H1 (cell line): ENCODE measurements at regions of chr1 and their contacts with region 1.

Region 1: DNA sequence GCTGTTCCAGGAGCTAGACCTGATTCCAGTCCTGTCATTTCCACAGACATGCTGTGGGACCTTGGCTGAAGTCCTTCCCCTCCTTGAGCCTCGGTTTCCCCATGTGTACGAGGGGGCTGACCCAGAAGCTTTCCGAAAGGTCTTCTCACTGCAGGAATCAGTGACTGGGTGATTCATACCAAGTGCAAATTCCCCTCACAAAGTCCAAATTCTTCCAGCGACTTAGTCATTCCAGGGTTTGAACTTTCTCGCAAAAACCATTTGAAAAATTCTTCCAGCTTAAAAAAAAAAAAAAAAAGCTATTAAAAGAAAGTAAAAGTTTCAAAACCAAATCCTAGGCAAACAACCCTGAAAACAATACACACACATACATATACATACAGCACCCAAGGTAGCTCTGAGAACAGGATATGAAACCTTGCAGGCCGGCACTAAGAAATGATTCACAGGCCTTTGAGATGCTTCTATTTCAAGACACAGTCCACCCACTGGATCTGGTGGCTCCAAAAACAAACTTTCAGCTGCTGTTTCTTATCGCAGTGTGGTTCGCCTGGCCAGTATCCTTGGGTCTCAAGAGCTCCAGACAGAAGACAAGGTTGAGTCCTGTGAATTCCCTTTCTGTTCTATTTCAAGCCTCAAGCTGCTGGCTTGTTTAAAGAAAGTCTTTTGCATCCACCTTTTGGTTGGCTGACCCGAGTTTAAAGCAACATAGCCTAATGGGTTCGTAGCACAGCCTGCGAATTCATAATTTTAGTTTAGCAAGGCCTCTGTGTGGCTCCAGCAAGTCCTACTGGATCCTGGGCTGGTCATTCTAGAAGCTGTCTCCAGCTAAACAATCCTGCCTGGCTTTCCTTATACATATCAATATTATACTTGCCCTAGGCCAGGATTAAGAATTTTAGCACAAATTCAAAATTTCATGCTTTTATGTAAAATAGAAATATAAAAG is 18.0 kb upstream of the ID3 start:
- DNase-seq: no peak
- H3K4me3 ChIP-seq: no peak overlapping the region
- H3K27ac ChIP-seq: no peak overlapping the region
- H3K4me1 ChIP-seq: peaks cover 2 to 6% (median 3%) of the 10 kb centered on the region in 4 experiments; a peak in 4 of 7 replicates
- H3K27me3 ChIP-seq: no peaks in the 10 kb centered on the region
- CTCF ChIP-seq: no peak
- EP300 ChIP-seq: no peak
- POLR2A ChIP-seq: no peak
- RAD21 ChIP-seq: no peak

Region 2: DNA sequence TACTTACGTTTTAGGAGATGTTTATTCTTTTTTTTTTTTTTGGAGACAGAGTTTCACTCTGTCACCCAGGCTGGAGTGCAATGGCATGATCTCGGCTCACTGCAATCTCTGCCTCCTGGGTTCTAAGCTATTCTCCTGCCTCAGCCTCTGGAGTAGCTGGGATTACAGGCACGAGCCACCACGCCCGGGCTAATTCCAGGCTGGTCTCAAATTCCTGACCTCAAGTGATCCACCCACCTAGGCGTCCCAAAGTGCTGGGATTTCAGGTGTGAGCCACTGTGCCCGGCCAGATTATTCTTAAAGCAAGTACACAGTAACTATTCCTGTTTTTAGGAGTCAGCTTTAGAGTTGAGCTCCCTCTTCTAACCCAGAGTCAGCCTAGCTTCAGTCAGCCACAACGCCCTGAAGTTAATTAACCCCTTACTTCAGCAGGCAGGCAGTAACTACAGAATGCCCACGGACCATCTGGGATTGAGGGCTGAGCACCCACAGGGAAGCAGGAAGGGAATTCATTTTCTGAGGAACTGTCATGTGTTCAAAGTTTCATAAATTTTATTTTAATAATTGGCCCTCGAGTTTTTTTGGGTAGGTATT is 12.7 kb before region 1 on chr1:
- CTCF ChIA-PET with region 1: interaction called, 18 read pairs
- POLR2A ChIA-PET with region 1: interaction called, 283 read pairs
- DNase-seq: no peak
- H3K4me3 ChIP-seq: no peak overlapping the region
- H3K27ac ChIP-seq: no peak overlapping the region
- H3K4me1 ChIP-seq: peaks cover 16 to 36% (median 20%) of the 10 kb centered on the region in 4 experiments
- H3K27me3 ChIP-seq: peaks cover 0 to 4% (median 0%) of the 10 kb centered on the region in 4 experiments; a peak in 4 of 7 replicates
- CTCF ChIP-seq: no peak
- EP300 ChIP-seq: no peak
- POLR2A ChIP-seq: no peak
- RAD21 ChIP-seq: no peak

Region 3: DNA sequence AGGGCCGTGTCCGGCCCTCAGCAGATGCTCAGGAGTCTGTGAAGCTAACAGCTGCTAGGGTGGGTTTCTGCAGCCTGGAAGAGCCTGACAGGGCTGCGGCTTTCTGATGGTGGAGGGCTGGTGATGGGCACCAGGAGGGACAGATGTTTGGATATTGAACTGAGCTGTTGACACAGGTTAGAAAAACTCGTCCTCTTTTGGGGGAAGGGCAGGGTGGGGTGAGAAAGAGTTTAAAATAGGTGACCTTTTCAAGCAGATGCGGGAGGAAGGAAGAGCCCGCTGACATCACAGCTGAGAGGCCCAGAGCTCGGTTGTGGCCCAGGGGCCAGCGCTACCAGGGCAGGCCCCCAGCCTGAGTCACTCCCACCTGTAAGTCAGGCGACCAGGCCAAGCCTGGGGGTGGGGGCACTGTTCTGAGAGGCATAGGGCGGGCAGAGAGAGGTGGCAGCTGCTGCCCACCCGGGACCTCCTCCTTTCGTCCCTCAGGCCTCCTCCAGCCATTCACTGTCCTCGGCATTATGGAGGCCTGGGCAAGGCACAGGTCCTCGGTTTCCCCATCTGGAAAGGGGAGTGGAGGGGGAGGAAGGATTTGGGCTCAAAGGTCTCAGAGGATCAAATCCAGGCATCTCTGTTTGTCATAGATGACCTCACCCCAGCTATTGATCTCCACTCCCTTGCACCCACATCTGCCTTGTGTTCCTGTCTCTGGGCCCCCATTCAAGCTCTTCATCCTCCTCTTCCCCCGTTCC is 14.3 kb after region 1 on chr1:
- CTCF ChIA-PET with region 1: interaction called, 7 read pairs
- POLR2A ChIA-PET with region 1: interaction called, 12 read pairs
- DNase-seq: no peak
- H3K4me3 ChIP-seq: no peak overlapping the region
- H3K27ac ChIP-seq: no peak overlapping the region
- H3K4me1 ChIP-seq: peaks cover under 1 to 19% (median 8%) of the 10 kb centered on the region in 4 experiments
- H3K27me3 ChIP-seq: no peaks in the 10 kb centered on the region; a peak in 1 of 7 replicates
- CTCF ChIP-seq: no peak
- EP300 ChIP-seq: no peak
- POLR2A ChIP-seq: no peak
- RAD21 ChIP-seq: no peak